ENCODE measurements at regions of chr11 and their contacts with region 1.

Region 1: DNA sequence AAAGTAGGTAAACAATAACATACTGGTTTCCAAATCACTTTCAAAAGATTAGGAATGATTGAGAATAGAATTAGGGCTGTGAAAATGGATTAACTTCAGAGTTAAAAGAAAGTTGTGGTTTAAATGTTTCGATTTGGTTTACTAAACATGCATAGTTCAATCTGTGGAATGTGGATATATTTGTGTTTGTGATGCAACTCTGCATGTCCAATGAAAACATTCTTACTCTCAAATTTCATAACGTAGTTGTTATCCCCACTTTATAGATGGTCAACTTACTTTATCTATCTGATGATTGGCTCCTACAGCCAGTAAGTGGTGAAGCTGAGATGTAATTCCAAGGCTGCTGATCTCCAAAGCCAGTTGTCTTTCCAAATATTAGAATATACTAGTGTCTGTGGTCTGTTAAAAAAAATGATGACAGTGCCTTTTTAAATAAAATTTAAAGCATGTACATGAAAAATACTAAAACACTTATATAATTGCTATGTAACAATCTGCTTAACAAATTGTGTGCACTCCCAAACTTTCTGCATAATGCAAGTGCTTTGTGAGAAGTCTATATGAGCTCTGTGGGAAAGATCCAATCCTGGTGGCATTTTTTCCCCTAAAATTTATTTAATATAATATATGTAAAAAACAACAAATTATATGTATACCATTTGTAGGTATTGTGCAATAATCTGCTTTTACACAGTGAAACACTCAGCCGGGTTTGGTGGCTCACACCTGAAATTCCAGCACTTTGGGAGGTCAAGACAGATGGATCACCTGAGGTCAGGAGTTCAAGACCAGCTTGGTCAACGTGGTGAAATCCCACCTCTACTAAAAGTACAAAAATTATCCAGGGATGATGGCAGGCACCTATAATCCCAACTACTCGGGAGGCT is 9.7 kb upstream of the SIK3 start:
- DNase-seq: no peak
- ATAC-seq: no peak
- H3K4me3 ChIP-seq: no peak overlapping the region
- H3K4me3 Mint-ChIP-seq: no peak overlapping the region
- H3K27ac ChIP-seq: no peak overlapping the region
- H3K27ac Mint-ChIP-seq: no peak overlapping the region
- H3K4me1 ChIP-seq: peaks cover 0 to 5% of the 10 kb centered on the region in 2 experiments
- H3K4me1 Mint-ChIP-seq: peaks cover 0 to 6% (median 2%) of the 10 kb centered on the region in 3 donors
- H3K27me3 ChIP-seq: peaks cover 0 to 11% of the 10 kb centered on the region in 2 experiments
- H3K27me3 Mint-ChIP-seq: no peaks in the 10 kb centered on the region

Region 2: GRCh38 chr11:116879800-116880625 is 227.9 kb before region 1 on chr11:
- CTCF ChIA-PET with region 1: interaction called, 8 to 24 read pairs
- POLR2A ChIA-PET with region 1: interaction called in 1 of 2 experiments, 4 read pairs
- DNase-seq: peak in 10 of 35 experiments; percentile 6 to 76 (median 13)
- ATAC-seq: peak; percentile 58 to 87 (median 80)
- H3K4me3 ChIP-seq: no peak overlapping the region
- H3K4me3 Mint-ChIP-seq: no peak overlapping the region
- H3K27ac ChIP-seq: no peak overlapping the region
- H3K27ac Mint-ChIP-seq: no peak overlapping the region
- H3K4me1 ChIP-seq: no peaks in the 10 kb centered on the region
- H3K4me1 Mint-ChIP-seq: peaks cover 8 to 11% (median 10%) of the 10 kb centered on the region in 3 donors
- H3K27me3 ChIP-seq: no peaks in the 10 kb centered on the region
- H3K27me3 Mint-ChIP-seq: no peaks in the 10 kb centered on the region

Region 3: DNA sequence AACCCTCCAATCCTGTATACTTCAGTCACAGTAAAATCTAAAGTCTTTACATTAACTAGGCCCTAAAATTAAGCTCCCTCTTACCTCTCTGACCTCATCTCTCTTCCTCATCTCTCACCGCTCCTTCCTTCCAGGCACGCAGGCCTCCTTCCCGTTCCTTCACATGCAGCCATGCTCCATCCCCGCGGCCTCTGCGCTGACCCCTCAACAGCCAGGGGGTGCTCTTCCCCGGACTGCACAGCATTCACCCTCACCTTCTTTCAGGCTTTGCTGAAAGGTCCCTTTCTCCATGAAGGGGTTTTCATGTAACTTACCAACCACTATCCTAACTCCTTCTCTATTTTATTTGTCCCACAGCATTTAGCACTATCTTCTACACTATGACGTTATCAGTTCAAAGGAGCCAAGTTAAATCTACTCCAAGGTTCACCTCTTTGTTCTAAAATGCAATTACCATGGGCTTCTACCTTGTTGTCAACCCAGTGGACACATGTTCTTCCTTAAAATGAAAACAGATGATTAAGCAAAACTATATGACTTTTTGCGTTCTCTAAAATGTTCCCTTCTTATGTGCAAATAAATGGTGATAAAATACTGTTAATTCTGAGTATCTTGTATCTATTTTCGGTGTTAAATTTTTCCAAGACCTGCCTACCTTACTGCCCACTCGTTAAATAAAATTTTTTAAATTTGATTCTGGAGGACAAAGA is 212.7 kb before region 1 on chr11:
- CTCF ChIA-PET with region 1: interaction called, 3 to 19 read pairs
- POLR2A ChIA-PET with region 1: no interaction called
- DNase-seq: peak in 10 of 35 experiments; percentile 1 to 46 (median 9)
- ATAC-seq: peak in 3 of 4 experiments; percentile 33 to 63 (median 56)
- H3K4me3 ChIP-seq: no peak overlapping the region
- H3K4me3 Mint-ChIP-seq: no peak overlapping the region
- H3K27ac ChIP-seq: no peak overlapping the region
- H3K27ac Mint-ChIP-seq: peak overlapping the region; percentile 21 to 71
- H3K4me1 ChIP-seq: peaks cover 0 to 4% of the 10 kb centered on the region in 2 experiments
- H3K4me1 Mint-ChIP-seq: peaks cover 10 to 27% (median 20%) of the 10 kb centered on the region in 3 donors
- H3K27me3 ChIP-seq: no peaks in the 10 kb centered on the region
- H3K27me3 Mint-ChIP-seq: no peaks in the 10 kb centered on the region